H1 (cell line): ENCODE measurements at regions of chr10 and their contacts with region 1.

Region 1: GRCh38 chr10:69819716-69820506 is 18.2 kb downstream of the COL13A1 start:
- DNase-seq: no peak
- H3K4me3 ChIP-seq: no peak overlapping the region
- H3K27ac ChIP-seq: no peak overlapping the region
- H3K4me1 ChIP-seq: peaks cover 0 to 4% (median 1%) of the 10 kb centered on the region in 4 experiments; a peak in 2 of 7 replicates
- H3K27me3 ChIP-seq: no peaks in the 10 kb centered on the region; a peak in 1 of 7 replicates
- CTCF ChIP-seq: no peak
- EP300 ChIP-seq: no peak
- POLR2A ChIP-seq: no peak
- RAD21 ChIP-seq: no peak

Region 2: GRCh38 chr10:69678005-69678654 is 141.8 kb before region 1 on chr10:
- CTCF ChIA-PET with region 1: no interaction called
- POLR2A ChIA-PET with region 1: no interaction called
- DNase-seq: no peak
- H3K4me3 ChIP-seq: no peak overlapping the region
- H3K27ac ChIP-seq: no peak overlapping the region
- H3K4me1 ChIP-seq: peaks cover 0 to 4% (median 0%) of the 10 kb centered on the region in 4 experiments; a peak in 1 of 7 replicates
- H3K27me3 ChIP-seq: no peaks in the 10 kb centered on the region
- CTCF ChIP-seq: no peak
- EP300 ChIP-seq: no peak
- POLR2A ChIP-seq: no peak
- RAD21 ChIP-seq: no peak

Region 3: GRCh38 chr10:69728335-69728870 is 91.5 kb before region 1 on chr10:
- CTCF ChIA-PET with region 1: no interaction called
- POLR2A ChIA-PET with region 1: no interaction called
- DNase-seq: peak in 1 of 2 experiments; percentile 33
- H3K4me3 ChIP-seq: no peak overlapping the region
- H3K27ac ChIP-seq: no peak overlapping the region
- H3K4me1 ChIP-seq: peaks cover 0 to 10% (median 4%) of the 10 kb centered on the region in 4 experiments; a peak in 4 of 7 replicates
- H3K27me3 ChIP-seq: no peaks in the 10 kb centered on the region; a peak in 1 of 7 replicates
- CTCF ChIP-seq: no peak
- EP300 ChIP-seq: no peak
- POLR2A ChIP-seq: no peak
- RAD21 ChIP-seq: no peak

Region 4: DNA sequence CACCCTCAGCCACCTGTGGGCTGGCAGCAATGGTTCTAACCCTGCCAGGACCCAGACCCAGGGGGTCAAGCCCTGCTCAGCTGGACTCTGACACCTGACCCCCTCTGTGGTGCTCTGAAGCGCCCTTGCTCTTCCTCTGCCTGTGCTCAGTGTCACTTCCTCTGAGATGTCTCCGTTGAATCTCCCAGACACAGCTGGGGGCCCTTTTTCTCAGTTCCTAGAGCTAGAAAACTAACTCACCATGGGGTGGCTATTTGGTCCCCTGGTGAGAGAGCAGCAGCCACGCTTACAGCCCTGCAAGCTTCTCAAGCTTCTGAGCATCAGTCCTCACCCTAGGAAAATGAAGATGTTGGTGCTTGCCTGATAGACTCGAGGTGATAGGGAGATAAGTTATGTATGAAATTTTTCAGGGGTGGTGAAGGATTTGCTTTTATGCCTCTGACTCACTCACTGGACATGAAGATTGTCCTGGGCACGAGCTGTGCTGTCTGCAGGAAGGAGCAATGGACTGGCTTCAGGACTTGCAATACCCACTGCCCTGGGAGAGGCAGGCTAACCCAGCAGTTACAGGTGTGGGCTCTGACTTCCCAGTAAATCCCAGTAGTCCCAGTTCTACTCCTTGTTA is 11.4 kb after region 1 on chr10:
- CTCF ChIA-PET with region 1: interaction called, 40 read pairs
- POLR2A ChIA-PET with region 1: no interaction called
- DNase-seq: no peak
- H3K4me3 ChIP-seq: no peak overlapping the region
- H3K27ac ChIP-seq: no peak overlapping the region
- H3K4me1 ChIP-seq: peaks cover 2 to 19% (median 10%) of the 10 kb centered on the region in 4 experiments; a peak in 5 of 7 replicates
- H3K27me3 ChIP-seq: no peaks in the 10 kb centered on the region
- CTCF ChIP-seq: no peak
- EP300 ChIP-seq: no peak
- POLR2A ChIP-seq: no peak
- RAD21 ChIP-seq: no peak

Region 5: DNA sequence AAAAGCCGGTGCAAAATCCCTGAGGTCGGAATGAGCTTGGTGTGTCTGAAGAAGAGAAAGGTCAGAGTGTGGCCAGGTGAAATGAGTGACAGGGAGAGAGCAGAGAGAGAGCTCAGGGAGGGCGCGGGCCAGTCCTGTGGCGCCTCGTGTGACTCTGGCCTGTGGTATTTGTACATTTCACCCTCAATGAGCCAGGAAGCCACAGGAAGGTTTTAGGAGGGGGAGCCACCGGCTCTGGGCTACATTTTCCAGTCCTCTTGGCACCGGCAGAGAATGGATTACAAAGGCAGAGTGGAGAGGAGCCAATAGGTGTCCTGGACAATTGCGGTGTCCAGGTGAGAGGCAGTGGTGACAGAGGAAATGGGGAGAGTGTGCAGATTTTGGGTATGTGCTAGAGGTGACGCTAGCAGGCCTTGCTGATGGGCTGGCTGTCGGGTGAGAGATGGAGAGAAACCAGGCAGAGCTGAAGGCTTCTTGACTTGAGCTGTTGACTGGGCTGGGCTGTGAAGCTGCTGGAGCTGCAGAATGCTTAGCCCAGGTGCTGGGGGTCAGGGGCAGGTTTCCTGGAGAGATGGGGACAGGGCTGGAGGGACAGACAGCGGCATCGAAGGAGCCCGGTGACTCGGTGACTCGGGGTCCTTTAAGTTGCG is 19.9 kb after region 1 on chr10:
- CTCF ChIA-PET with region 1: interaction called, 23 read pairs
- POLR2A ChIA-PET with region 1: interaction called, 3 read pairs
- DNase-seq: no peak
- H3K4me3 ChIP-seq: no peak overlapping the region
- H3K27ac ChIP-seq: no peak overlapping the region
- H3K4me1 ChIP-seq: peaks cover 8 to 31% (median 21%) of the 10 kb centered on the region in 4 experiments
- H3K27me3 ChIP-seq: peaks cover 0 to 2% (median 0%) of the 10 kb centered on the region in 4 experiments; a peak in 1 of 7 replicates
- CTCF ChIP-seq: no peak
- EP300 ChIP-seq: no peak
- POLR2A ChIP-seq: no peak
- RAD21 ChIP-seq: no peak

Region 6: DNA sequence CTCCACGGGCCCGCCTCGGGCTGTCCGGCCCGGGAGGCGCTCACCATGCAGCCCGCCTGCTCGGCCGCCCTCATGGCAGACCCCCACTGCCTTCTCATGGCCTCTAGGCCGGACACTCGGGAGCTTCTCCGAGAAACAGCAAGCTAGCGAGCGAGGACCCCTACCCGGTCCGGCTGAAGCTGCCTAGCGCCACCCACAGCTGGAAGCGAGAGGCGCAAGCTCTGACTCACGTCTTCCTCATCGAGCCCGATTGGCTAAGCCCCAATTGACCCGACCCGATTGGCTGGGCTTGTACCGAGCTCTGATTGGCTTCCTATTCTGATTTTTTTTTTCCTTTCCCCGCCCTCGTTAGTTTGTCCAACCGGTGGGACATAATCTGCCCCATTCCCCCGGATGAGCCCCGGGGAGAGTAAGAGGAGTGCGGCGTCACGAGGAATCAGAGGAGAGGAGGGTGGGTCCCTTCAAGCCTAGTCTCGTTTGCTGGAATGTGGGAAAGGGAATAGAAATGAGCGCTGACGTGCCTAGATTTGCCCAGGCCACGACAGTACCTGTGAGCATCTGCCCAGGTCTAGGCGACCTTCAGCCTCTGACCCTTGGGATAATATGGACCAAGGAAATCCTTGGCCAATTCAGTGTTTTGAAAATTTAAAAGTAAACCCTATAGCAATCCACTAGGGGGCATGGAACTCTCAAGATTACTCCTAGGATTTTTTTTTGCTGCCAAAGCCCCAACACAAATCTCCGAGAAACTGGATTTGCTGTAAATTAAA is 326.8 kb after region 1 on chr10 and contains the start of gene TYSND1:
- CTCF ChIA-PET with region 1: no interaction called
- POLR2A ChIA-PET with region 1: no interaction called
- DNase-seq: peak; percentile 96 to 97
- H3K4me3 ChIP-seq: peak within 1 kb of the TSS; percentile 51 to 70 (median 59)
- H3K27ac ChIP-seq: peak within 1 kb of the TSS; percentile 67
- H3K4me1 ChIP-seq: peaks cover 3 to 9% (median 6%) of the 10 kb centered on the region in 4 experiments; a peak in 3 of 7 replicates
- H3K27me3 ChIP-seq: peaks cover 0 to 8% (median 4%) of the 10 kb centered on the region in 4 experiments; a peak in 3 of 7 replicates
- CTCF ChIP-seq: peak; percentile 77 to 82 (median 81)
- EP300 ChIP-seq: no peak
- POLR2A ChIP-seq: peak; percentile 64 to 87
- RAD21 ChIP-seq: peak; percentile 58 to 70
- total RNA-seq, gene TYSND1: 14.1 and 15.0 TPM in 2 replicates